ENCODE measurements at regions of chr6 and their contacts with region 1.

Region 1: DNA sequence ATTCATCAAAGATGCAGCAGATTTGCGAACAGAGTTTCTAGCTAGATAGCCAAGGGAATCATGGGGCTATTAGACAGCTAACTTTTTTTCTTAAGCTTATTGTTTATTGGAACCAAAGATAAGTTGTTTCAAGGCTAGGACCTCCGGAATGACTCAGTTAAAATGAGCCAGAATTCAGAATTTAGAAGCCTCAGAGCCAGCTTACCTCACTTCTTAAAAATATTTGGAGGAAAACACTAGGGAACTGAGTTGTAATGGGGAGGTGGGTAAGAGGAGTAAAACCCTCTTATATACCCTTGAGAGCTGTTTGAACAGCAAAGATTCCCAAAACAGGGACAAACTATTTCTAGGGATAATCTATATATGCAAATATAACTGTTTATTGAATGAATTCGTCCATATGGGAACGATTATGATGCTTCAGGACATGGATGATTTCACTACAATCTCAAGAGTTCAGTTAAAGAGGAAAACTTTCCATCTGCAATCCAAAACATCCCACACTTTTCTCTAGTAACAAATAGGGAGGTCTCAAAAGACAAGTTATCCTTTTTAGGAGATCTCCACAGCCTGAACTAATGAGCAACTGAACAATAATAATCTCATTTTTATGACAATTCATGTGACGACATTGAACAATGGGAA is 12.6 kb upstream of the CARMIL1 start:
- DNase-seq: no peak
- H3K4me3 ChIP-seq: no peak overlapping the region
- H3K27ac ChIP-seq: no peak overlapping the region
- H3K4me1 ChIP-seq: no peaks in the 10 kb centered on the region
- H3K27me3 ChIP-seq: no peaks in the 10 kb centered on the region
- CTCF ChIP-seq: no peak
- POLR2A ChIP-seq: no peak

Region 2: GRCh38 chr6:25556516-25556915 is 289.9 kb after region 1 on chr6:
- intact Hi-C with region 1: loop called (anchors 5 kb)
- DNase-seq: peak; percentile 70
- H3K4me3 ChIP-seq: no peak overlapping the region
- H3K27ac ChIP-seq: no peak overlapping the region
- H3K4me1 ChIP-seq: no peaks in the 10 kb centered on the region
- H3K27me3 ChIP-seq: no peaks in the 10 kb centered on the region
- CTCF ChIP-seq: peak; percentile 39 to 75 (median 64)
- POLR2A ChIP-seq: no peak

Region 3: DNA sequence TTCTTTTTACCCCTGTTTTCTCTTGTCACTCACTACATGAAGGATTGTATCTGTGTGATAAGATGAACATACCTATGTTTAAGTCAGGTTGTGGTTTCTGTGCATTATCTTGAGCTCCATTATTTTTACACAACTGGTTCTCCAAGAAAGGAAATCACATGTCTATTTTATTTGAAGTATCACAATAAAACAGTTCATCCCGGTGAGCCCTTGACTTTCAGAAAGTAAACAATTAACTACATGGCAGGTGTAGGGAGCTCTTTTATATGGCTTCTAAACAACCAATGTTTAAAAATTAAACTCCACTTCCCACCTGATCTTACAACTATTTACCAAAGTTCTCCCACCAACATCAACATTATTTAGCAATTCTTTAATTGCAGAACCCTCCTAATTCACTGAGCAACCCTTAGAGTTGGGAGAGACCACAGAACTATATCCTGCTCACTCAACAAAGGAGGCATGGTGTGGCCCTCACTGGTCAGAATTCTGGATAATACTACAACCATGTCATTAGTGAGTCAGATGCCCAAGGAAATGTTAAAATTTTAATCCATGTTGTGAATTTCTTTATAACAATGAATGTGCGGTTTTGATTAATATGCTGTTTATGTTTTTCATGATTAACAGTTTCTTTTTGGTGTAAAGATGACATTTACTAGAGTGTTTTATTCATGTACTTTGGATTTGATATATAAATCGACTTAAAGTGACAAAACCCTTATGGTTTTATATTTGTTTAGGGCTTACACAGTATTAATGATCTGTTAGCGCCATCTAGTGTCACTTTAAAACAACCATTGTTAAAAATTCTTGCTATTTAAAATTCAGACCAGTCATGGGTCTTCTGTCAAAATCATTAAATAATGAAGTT is 335.5 kb after region 1 on chr6:
- intact Hi-C with region 1: loop called (anchors 5 kb)
- DNase-seq: no peak
- H3K4me3 ChIP-seq: no peak overlapping the region
- H3K27ac ChIP-seq: no peak overlapping the region
- H3K4me1 ChIP-seq: peaks cover 3% of the 10 kb centered on the region
- H3K27me3 ChIP-seq: no peaks in the 10 kb centered on the region
- CTCF ChIP-seq: peak in 3 of 4 experiments; percentile 68 to 70 (median 70)
- POLR2A ChIP-seq: no peak